Activated CD4-positive, alpha-beta T cell treated with anti-CD3 and anti-CD28 coated beads for 36 hours (primary cell): ENCODE measurements at regions of chr5 and their contacts with region 1.

Region 1: GRCh38 chr5:129031886-129032669 is 62.5 kb upstream of the ISOC1 start:
- DNase-seq: no peak
- ATAC-seq: no peak
- H3K4me3 Mint-ChIP-seq: no peak overlapping the region
- H3K27ac Mint-ChIP-seq: no peak overlapping the region
- H3K4me1 Mint-ChIP-seq: no peaks in the 10 kb centered on the region
- H3K27me3 Mint-ChIP-seq: peaks cover 12% of the 10 kb centered on the region

Region 2: DNA sequence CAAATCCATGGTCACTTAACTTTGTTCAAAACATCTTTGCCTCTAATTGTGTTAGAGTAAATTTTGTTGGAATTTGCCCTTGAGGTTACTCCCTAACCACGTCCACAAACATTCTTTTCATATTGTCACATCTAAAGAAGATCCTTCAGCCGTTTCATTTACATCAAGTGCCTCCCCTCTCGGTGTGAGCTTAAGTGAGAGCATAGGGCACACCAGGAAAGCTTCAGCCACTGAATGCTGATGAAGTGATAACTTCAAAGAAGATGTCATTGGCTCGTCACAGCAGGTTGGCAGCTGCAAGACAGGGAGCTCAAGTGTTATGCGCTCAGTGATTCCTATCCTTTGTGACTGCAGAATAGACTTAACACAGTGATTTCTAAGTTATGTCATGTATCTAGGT is 378.4 kb after region 1 on chr5:
- CTCF ChIA-PET with region 1: no interaction called
- POLR2A ChIA-PET with region 1: no interaction called
- intact Hi-C with region 1: no loop called
- DNase-seq: no peak
- ATAC-seq: no peak
- H3K4me3 Mint-ChIP-seq: no peak overlapping the region
- H3K27ac Mint-ChIP-seq: no peak overlapping the region
- H3K4me1 Mint-ChIP-seq: no peaks in the 10 kb centered on the region
- H3K27me3 Mint-ChIP-seq: no peaks in the 10 kb centered on the region

Region 3: DNA sequence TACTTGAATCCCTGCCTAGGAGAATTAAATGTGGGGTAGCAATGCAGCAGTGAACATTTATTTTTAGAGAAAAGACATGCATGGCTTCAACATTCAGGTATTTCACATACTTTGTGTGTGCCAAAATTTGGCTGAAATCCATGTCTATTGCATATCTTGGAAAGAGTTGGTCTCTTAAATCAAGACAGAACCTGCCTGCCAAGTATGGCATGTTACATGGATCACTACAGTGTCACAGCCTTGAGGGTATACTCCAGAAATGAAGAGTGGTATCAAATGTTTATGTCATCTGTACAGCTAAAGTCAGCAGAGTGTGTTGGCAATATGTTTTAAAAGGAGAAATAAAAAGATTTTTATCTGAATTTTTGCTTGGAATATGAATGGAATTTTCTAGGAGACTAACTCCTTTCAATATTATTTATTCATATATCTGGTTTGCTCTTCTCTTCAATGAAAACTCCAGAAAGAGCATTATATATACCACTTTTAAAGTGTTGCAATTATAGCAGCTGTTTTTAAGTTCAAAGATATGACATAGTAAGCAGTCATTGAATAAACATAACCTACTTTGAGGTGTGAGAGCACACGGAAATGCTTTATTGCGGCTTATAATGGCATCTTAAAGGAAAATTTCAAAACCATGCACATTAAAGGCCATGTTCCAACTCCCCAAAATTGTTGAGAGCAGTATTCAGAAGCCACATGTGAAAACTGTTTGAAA is 620.4 kb after region 1 on chr5:
- CTCF ChIA-PET with region 1: no interaction called
- POLR2A ChIA-PET with region 1: no interaction called
- intact Hi-C with region 1: loop called in 1 of 2 experiments (anchors 10 kb)
- DNase-seq: no peak
- ATAC-seq: no peak
- H3K4me3 Mint-ChIP-seq: no peak overlapping the region
- H3K27ac Mint-ChIP-seq: no peak overlapping the region
- H3K4me1 Mint-ChIP-seq: no peaks in the 10 kb centered on the region
- H3K27me3 Mint-ChIP-seq: peaks cover 3% of the 10 kb centered on the region